Right lobe of liver (tissue), 6 donors: ENCODE measurements at regions of chr14 and their contacts with region 1.

Region 1: DNA sequence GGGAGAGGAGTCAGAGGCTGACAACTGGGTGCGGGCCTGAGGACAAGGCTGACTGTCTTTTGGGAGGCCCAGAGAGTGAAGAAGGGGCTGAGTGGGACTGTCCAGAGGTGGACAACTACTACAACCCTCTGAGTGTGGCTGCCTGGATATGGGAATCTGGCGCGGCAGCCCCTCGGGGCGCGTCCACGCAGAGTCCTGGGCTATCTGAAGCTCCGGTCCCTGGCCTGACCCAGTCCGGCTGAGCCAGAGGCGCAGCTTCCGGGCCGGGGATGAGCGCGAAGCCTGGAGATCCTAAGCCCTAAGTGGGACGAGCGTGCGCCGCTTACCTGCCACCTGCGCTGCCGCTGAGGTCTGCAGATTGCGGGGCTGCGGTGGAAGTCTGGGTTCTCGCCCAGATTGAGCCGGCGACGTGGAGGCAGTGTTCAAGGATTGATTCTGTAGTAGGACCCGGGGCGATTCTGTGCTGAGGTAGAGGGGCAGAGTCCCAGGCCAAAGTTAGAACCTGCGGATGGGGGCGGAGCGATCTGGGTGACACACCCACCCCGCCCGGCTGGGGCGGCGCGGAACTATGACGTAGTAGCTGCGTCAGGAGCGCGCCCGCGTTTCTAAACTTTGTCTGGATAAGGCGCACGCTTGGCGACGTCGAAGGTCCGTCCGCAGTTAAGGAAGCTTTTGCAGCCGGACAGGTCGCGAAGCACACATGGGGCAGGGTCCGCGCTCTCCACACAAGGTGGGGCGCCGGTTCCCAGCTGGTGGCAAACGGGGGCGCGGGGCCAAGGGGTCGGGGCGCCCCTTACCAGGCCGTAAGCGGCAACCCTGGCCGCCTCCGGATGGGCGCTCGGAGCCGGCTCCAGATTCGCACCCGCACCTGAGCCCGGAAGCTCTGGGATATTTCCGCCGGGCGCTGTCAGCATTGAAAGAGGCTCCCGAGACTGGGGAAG is at the starts of genes DHRS1 and NOP9:
- DNase-seq: peak; percentile 94 to 97 (median 96)
- ATAC-seq: peak; percentile 88 to 91 (median 88)
- H3K4me3 ChIP-seq: peak within 1 kb of the TSS; percentile 46 to 98 (median 80)
- H3K27ac ChIP-seq: peak within 1 kb of the TSS; percentile 79 to 93 (median 81)
- H3K4me1 ChIP-seq: peaks cover 0 to 54% (median 16%) of the 10 kb centered on the region in 4 donors
- H3K27me3 ChIP-seq: no peaks in the 10 kb centered on the region
- CTCF ChIP-seq: no peak
- POLR2A ChIP-seq: peak; percentile 91
- total RNA-seq, gene DHRS1: 49.1 to 89.3 (median 60.1) TPM
- total RNA-seq, gene NOP9: 8.2 to 15.3 (median 11.4) TPM

Region 2: DNA sequence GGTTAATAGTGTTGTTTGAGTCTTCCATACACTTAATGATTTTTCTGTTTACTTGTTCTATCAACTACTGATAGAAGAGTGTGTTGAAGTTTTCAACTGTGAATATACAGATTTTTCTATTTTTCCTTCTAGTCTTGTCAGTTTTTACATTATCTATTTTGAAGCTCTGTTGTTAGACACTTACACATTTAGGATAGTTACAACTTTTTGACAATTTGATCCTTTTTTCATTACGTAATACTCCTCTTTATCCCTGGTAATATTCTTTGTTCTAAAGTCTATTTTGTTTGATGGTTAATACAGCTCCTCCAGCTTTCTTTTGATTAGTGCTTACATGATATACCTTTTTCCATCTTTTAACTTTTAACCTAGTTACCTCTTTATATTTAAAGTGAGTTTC is 618.2 kb before region 1 on chr14:
- intact Hi-C with region 1: no loop called
- DNase-seq: no peak
- ATAC-seq: no peak
- H3K4me3 ChIP-seq: no peak overlapping the region
- H3K27ac ChIP-seq: no peak overlapping the region
- H3K4me1 ChIP-seq: no peaks in the 10 kb centered on the region
- H3K27me3 ChIP-seq: no peaks in the 10 kb centered on the region
- CTCF ChIP-seq: no peak
- POLR2A ChIP-seq: no peak

Region 3: DNA sequence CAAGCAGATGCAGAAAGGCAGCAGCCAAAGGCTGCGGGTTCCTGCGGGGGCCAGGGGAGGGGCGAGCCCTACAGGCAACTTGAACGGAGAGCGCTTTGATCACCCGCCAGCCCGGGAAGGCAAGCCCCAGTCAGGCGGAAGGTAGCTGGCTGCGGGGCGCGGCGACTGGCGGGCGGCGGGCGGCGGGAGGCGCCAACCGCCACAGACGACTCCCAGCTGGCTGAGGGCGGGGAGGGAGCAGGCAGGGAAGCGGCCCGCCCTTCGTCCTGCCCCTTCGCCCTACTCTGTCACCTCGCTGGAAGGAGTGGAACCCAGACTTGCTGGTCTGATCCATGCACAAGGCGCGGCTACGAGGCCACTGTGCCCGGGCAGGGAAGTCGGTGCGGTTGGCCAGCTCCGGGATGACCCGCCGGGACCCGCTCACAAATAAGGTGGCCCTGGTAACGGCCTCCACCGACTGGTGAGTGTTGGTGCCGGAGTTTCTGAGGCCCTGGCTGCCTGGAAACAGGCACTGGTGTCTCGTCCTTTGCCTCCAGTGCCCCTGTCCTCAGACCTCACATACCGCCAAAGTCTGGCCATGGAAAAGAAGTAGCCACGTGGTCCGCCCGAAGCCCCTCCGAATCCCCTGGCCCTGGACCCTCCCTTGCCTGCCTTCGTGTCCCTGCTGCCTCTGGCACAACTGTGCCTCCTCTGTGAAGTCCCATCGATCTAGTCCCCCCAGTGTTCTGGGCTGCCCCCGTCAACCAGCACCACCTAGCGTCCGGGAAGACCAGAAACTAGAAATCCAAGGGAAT is 263.2 kb before region 1 on chr14:
- intact Hi-C with region 1: no loop called
- DNase-seq: peak; percentile 84 to 92 (median 90)
- ATAC-seq: peak; percentile 91 to 97 (median 93)
- H3K4me3 ChIP-seq: peak overlapping the region; percentile 59 to 73 (median 60)
- H3K27ac ChIP-seq: peak overlapping the region; percentile 70 to 84 (median 83)
- H3K4me1 ChIP-seq: peaks cover 0 to 26% (median 4%) of the 10 kb centered on the region in 4 donors
- H3K27me3 ChIP-seq: no peaks in the 10 kb centered on the region
- CTCF ChIP-seq: peak; percentile 58 to 75 (median 74)
- POLR2A ChIP-seq: peak; percentile 53

Region 4: DNA sequence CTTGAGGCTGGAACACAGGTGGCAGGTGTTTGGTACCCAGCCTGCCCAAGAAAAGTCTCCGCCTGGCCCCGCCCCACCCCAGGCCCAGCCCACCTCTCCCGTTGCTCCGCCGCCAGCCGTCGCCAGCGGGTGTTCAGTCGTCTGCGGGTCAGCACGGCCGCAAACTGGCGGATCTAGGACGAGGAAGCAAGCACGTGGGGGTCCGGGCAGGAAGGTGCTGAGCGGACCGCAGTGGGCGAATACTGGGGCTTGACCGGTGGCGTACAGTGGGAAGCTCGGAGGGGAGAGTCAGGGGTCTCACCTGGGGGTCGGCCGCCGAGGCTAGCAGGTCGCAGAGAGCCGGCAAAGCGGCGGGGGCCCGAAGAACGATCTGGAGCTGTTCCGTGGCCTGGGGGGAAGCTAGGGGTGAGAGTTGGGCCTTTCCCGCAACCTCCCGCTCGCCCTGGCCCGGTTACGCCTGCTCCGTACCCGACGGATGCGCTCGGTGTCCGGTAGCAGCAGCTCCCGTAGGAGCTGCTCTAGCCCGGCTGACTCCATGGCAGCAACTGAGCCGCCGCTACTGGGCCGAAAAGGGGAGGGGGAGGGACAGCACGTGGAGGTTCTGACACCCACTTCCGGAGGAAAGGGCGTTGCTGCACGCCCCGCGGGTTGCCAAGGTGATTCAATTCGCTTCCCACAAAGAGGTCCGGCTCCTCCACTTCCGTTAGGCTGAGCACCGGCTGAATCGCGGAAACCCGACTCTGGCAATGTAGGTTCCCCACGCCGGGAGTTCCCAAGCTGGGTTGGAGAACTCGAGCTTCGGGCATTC is 111.1 kb before region 1 on chr14 and contains the start of gene IPO4:
- intact Hi-C with region 1: no loop called
- DNase-seq: peak; percentile 95 to 98 (median 97)
- ATAC-seq: peak; percentile 95 to 99 (median 96)
- H3K4me3 ChIP-seq: peak within 1 kb of the TSS; percentile 72 to 82 (median 74)
- H3K27ac ChIP-seq: peak within 1 kb of the TSS in 2 of 3 donors; percentile 21 to 30
- H3K4me1 ChIP-seq: peaks cover 0 to 11% (median 4%) of the 10 kb centered on the region in 4 donors
- H3K27me3 ChIP-seq: no peaks in the 10 kb centered on the region
- CTCF ChIP-seq: no peak
- POLR2A ChIP-seq: peak; percentile 82
- total RNA-seq, gene IPO4: 17.9 to 44.0 (median 23.0) TPM

Region 5: GRCh38 chr14:24241829-24242443 is 57.6 kb before region 1 on chr14:
- intact Hi-C with region 1: loop called (anchors 5 to 10 kb)
- DNase-seq: peak; percentile 96
- ATAC-seq: peak; percentile 91 to 96 (median 92)
- H3K4me3 ChIP-seq: peak overlapping the region; percentile 66 to 86 (median 73)
- H3K27ac ChIP-seq: peak overlapping the region; percentile 93 to 100 (median 94)
- H3K4me1 ChIP-seq: peaks cover 0 to 19% (median 0%) of the 10 kb centered on the region in 4 donors
- H3K27me3 ChIP-seq: no peaks in the 10 kb centered on the region
- CTCF ChIP-seq: peak; percentile 59 to 80 (median 64)
- POLR2A ChIP-seq: no peak

Region 6: GRCh38 chr14:24784981-24785380 is 485.5 kb after region 1 on chr14:
- intact Hi-C with region 1: no loop called
- DNase-seq: no peak
- ATAC-seq: no peak
- H3K4me3 ChIP-seq: no peak overlapping the region
- H3K27ac ChIP-seq: no peak overlapping the region
- H3K4me1 ChIP-seq: no peaks in the 10 kb centered on the region
- H3K27me3 ChIP-seq: no peaks in the 10 kb centered on the region
- CTCF ChIP-seq: no peak
- POLR2A ChIP-seq: no peak